ENCODE measurements at regions of chr6 and their contacts with region 1.

Region 1: DNA sequence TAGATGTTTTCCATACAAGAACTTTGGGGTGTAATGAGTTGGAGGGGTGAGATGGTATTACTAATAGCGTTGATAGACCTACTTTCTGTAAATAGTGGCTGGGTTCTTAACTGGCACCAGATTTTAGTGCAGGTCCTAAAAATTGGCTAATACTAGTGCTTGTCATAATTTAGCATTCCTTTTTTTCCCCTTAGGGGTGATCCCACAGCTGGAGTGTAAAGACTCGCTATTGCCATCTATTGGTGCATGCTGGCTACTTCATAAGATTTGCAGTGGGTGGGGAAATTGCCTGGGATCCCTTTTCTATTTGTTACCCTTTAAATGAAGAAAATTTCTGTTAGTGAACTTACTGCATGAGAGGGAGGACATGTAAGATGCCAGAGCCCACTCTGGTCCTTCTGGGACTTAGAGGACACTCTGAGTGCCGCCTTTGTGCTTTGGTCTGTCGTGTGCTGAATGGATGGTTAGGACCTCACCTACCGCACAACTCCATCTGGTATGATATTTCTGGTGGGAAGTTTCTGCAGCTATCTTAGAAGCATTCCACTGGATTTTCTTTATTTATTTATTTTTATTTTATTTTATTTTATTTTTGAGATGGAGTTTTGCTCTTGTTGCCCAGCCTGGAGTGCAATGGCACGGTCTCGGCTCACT is 195.5 kb downstream of the JARID2 start:
- DNase-seq: peak; percentile 45
- ATAC-seq: peak; percentile 40
- H3K4me3 Mint-ChIP-seq: no peak overlapping the region
- H3K27ac Mint-ChIP-seq: no peak overlapping the region
- H3K4me1 Mint-ChIP-seq: peaks cover 60% of the 10 kb centered on the region
- H3K27me3 Mint-ChIP-seq: no peaks in the 10 kb centered on the region
- CTCF ChIP-seq: peak; percentile 86

Region 2: GRCh38 chr6:15245361-15246216 is 195.8 kb before region 1 on chr6 and contains the start of gene JARID2:
- CTCF ChIA-PET with region 1: interaction called, 3 read pairs
- POLR2A ChIA-PET with region 1: interaction called, 5 read pairs
- intact Hi-C with region 1: loop called (anchors 5 kb)
- DNase-seq: peak; percentile 99
- ATAC-seq: peak; percentile 66
- H3K4me3 Mint-ChIP-seq: peak within 1 kb of the TSS; percentile 100
- H3K27ac Mint-ChIP-seq: peak within 1 kb of the TSS; percentile 97
- H3K4me1 Mint-ChIP-seq: peaks cover 18% of the 10 kb centered on the region
- H3K27me3 Mint-ChIP-seq: no peaks in the 10 kb centered on the region
- CTCF ChIP-seq: no peak
- total RNA-seq, gene JARID2: 25.4 to 25.5 TPM

Region 3: GRCh38 chr6:15327271-15327670 is 114.1 kb before region 1 on chr6:
- CTCF ChIA-PET with region 1: interaction called, 3 read pairs
- POLR2A ChIA-PET with region 1: interaction called, 3 read pairs
- intact Hi-C with region 1: loop called (anchors 5 kb)
- DNase-seq: peak; percentile 82
- ATAC-seq: peak; percentile 70
- H3K4me3 Mint-ChIP-seq: no peak overlapping the region
- H3K27ac Mint-ChIP-seq: peak overlapping the region; percentile 81
- H3K4me1 Mint-ChIP-seq: peaks cover 89% of the 10 kb centered on the region
- H3K27me3 Mint-ChIP-seq: no peaks in the 10 kb centered on the region
- CTCF ChIP-seq: peak; percentile 37

Region 4: GRCh38 chr6:15378866-15379265 is 62.5 kb before region 1 on chr6:
- CTCF ChIA-PET with region 1: no interaction called
- POLR2A ChIA-PET with region 1: no interaction called
- intact Hi-C with region 1: no loop called
- DNase-seq: no peak
- ATAC-seq: no peak
- H3K4me3 Mint-ChIP-seq: no peak overlapping the region
- H3K27ac Mint-ChIP-seq: no peak overlapping the region
- H3K4me1 Mint-ChIP-seq: peaks cover 48% of the 10 kb centered on the region
- H3K27me3 Mint-ChIP-seq: no peaks in the 10 kb centered on the region
- CTCF ChIP-seq: no peak

Region 5: DNA sequence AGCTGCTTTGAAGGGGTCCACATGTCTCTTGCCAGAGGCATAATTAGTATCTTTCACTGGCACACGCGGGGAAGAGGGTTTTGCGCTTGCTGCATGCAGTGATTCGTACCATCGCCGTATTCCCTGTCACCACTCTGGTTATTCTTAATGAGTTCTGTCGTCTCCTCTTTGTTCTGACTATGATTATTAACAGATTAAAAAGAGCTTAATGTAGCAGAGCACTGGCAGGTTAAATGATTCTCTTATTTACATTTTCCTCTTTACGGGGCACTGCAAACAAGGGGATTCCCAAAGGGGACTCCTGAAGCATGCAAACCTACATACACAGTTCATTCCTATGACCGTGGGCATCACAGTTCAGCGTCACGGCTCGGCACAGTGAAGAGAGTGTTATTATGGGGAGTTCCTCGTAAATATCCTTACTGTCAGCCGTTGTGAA is 16.7 kb after region 1 on chr6:
- CTCF ChIA-PET with region 1: interaction called, 13 read pairs
- POLR2A ChIA-PET with region 1: no interaction called
- intact Hi-C with region 1: no loop called
- DNase-seq: no peak
- ATAC-seq: no peak
- H3K4me3 Mint-ChIP-seq: no peak overlapping the region
- H3K27ac Mint-ChIP-seq: no peak overlapping the region
- H3K4me1 Mint-ChIP-seq: peaks cover 43% of the 10 kb centered on the region
- H3K27me3 Mint-ChIP-seq: no peaks in the 10 kb centered on the region
- CTCF ChIP-seq: no peak

Measured in activated CD8-positive, alpha-beta T cell treated with anti-CD3 and anti-CD28 coated beads for 36 hours (primary cell).